Activated CD4-positive, alpha-beta T cell treated with anti-CD3 and anti-CD28 coated beads for 36 hours (primary cell): ENCODE measurements at regions of chr14 and their contacts with region 1.

Region 1: GRCh38 chr14:98103705-98104104 is 1168.3 kb downstream of the BCL11B start:
- DNase-seq: peak; percentile 27
- ATAC-seq: no peak
- H3K4me3 Mint-ChIP-seq: no peak overlapping the region
- H3K27ac Mint-ChIP-seq: no peak overlapping the region
- H3K4me1 Mint-ChIP-seq: peaks cover 52% of the 10 kb centered on the region
- H3K27me3 Mint-ChIP-seq: no peaks in the 10 kb centered on the region

Region 2: GRCh38 chr14:97994020-97994531 is 109.6 kb before region 1 on chr14:
- CTCF ChIA-PET with region 1: no interaction called
- POLR2A ChIA-PET with region 1: interaction called, 10 read pairs
- intact Hi-C with region 1: loop called (anchors 1 to 2 kb)
- DNase-seq: peak; percentile 52
- ATAC-seq: peak; percentile 81
- H3K4me3 Mint-ChIP-seq: peak overlapping the region; percentile 18
- H3K27ac Mint-ChIP-seq: peak overlapping the region; percentile 94
- H3K4me1 Mint-ChIP-seq: peaks cover 71% of the 10 kb centered on the region
- H3K27me3 Mint-ChIP-seq: no peaks in the 10 kb centered on the region

Region 3: GRCh38 chr14:98008381-98009113 is 95.2 kb before region 1 on chr14:
- CTCF ChIA-PET with region 1: no interaction called
- POLR2A ChIA-PET with region 1: no interaction called
- intact Hi-C with region 1: loop called in 1 of 2 experiments (anchors 2 kb)
- DNase-seq: peak; percentile 38
- ATAC-seq: peak; percentile 85
- H3K4me3 Mint-ChIP-seq: no peak overlapping the region
- H3K27ac Mint-ChIP-seq: peak overlapping the region; percentile 85
- H3K4me1 Mint-ChIP-seq: peaks cover 53% of the 10 kb centered on the region
- H3K27me3 Mint-ChIP-seq: no peaks in the 10 kb centered on the region

Region 4: GRCh38 chr14:98130691-98131090 is 27.0 kb after region 1 on chr14:
- CTCF ChIA-PET with region 1: no interaction called
- POLR2A ChIA-PET with region 1: no interaction called
- intact Hi-C with region 1: loop called in 1 of 2 experiments (anchors 5 kb)
- DNase-seq: no peak
- ATAC-seq: no peak
- H3K4me3 Mint-ChIP-seq: no peak overlapping the region
- H3K27ac Mint-ChIP-seq: no peak overlapping the region
- H3K4me1 Mint-ChIP-seq: peaks cover 24% of the 10 kb centered on the region
- H3K27me3 Mint-ChIP-seq: no peaks in the 10 kb centered on the region

Region 5: DNA sequence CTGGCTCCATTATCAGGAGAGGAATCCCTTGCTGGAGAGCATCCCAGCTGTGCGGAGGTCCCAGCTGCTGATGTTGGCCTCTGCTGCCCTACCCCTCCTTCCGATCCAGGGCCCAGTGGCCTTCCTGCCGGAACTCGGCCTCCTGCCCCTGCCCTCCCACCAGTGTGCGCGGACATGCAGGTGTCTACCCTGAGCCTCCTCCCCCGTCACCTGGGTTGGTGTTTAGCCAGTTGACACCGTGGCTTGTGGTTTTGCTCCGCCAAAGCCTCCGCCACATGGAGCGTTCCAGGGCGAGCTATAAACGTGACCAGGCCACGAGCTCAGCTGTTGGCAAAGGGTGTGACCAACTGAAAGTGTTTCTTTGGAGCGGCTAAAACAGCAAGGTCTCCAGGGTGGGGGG is 64.0 kb after region 1 on chr14:
- CTCF ChIA-PET with region 1: interaction called, 3 read pairs
- POLR2A ChIA-PET with region 1: no interaction called
- intact Hi-C with region 1: loop called in 1 of 2 experiments (anchors 2 kb)
- DNase-seq: peak; percentile 50
- ATAC-seq: no peak
- H3K4me3 Mint-ChIP-seq: peak overlapping the region; percentile 31
- H3K27ac Mint-ChIP-seq: peak overlapping the region; percentile 99
- H3K4me1 Mint-ChIP-seq: peaks cover 92% of the 10 kb centered on the region
- H3K27me3 Mint-ChIP-seq: no peaks in the 10 kb centered on the region

Region 6: DNA sequence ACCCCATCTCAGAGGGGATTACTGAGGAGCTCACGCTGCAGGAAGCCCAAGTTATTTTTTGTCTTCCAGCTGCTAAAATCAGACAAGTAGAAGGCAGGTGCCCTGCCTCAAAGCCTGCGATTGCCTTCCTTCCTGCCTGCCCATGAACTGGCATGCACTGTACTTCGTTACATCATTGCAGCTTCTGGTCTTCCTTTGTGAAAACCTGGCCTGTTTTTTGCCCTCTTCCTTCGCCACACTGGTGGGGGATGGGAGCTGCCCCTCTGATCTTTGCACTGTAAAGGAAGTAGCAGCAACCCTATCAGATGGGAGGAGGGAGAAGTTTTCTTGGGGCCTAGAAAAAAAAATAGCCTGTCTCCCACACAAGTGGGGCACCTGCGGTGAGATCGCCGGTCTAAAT is 69.6 kb after region 1 on chr14:
- CTCF ChIA-PET with region 1: no interaction called
- POLR2A ChIA-PET with region 1: no interaction called
- intact Hi-C with region 1: loop called in 1 of 2 experiments (anchors 1 kb)
- DNase-seq: peak; percentile 70
- ATAC-seq: no peak
- H3K4me3 Mint-ChIP-seq: peak overlapping the region; percentile 50
- H3K27ac Mint-ChIP-seq: peak overlapping the region; percentile 99
- H3K4me1 Mint-ChIP-seq: peaks cover 99% of the 10 kb centered on the region
- H3K27me3 Mint-ChIP-seq: no peaks in the 10 kb centered on the region